ENCODE measurements at regions of chr1 and their contacts with region 1.

Region 1: DNA sequence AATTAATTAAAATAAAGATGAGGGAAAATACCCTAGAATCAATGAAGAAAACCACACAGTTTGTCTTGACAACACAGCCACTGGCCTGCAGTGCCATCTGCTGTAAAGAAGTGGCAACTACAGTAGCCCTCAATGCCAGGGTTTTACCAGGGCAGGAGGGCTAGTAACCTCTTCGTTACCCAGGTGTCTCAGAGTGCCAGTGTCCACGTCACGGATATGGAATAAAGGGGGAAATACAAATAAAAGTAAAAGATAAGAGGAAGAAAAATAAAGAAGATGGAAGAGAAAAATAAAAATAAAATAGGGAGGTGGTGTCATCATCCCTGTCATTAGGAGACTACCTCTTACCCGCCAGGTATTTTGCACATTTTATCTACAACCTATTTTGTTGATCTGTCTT is 14.2 kb upstream of the SLC44A3 start:
- DNase-seq: peak; percentile 55
- H3K4me3 ChIP-seq: no peak overlapping the region
- H3K27ac ChIP-seq: peak overlapping the region; percentile 44 to 75 (median 66)
- H3K4me1 ChIP-seq: peaks cover 27 to 82% (median 53%) of the 10 kb centered on the region in 4 donors
- H3K27me3 ChIP-seq: no peaks in the 10 kb centered on the region
- CTCF ChIP-seq: peak; percentile 97 to 100 (median 99)
- EP300 ChIP-seq: no peak
- POLR2A ChIP-seq: no peak

Region 2: GRCh38 chr1:94335950-94336349 is 470.0 kb before region 1 on chr1:
- in situ Hi-C with region 1: no loop called
- intact Hi-C with region 1: loop called (anchors 10 kb)
- DNase-seq: peak; percentile 70
- H3K4me3 ChIP-seq: no peak overlapping the region
- H3K27ac ChIP-seq: no peak overlapping the region
- H3K4me1 ChIP-seq: no peaks in the 10 kb centered on the region
- H3K27me3 ChIP-seq: no peaks in the 10 kb centered on the region
- CTCF ChIP-seq: peak; percentile 71 to 94 (median 74)
- EP300 ChIP-seq: no peak
- POLR2A ChIP-seq: no peak

Region 3: GRCh38 chr1:94522304-94522703 is 283.6 kb before region 1 on chr1:
- in situ Hi-C with region 1: loop called (anchors 10 kb)
- intact Hi-C with region 1: loop called (anchors 5 kb)
- DNase-seq: no peak
- H3K4me3 ChIP-seq: no peak overlapping the region
- H3K27ac ChIP-seq: no peak overlapping the region
- H3K4me1 ChIP-seq: no peaks in the 10 kb centered on the region
- H3K27me3 ChIP-seq: no peaks in the 10 kb centered on the region
- CTCF ChIP-seq: peak; percentile 23 to 44 (median 37)
- EP300 ChIP-seq: no peak
- POLR2A ChIP-seq: no peak

Measured in transverse colon (tissue), 4 donors.